CD4-positive, alpha-beta memory T cell (primary cell): ENCODE measurements at regions of chr1 and their contacts with region 1.

Region 1: DNA sequence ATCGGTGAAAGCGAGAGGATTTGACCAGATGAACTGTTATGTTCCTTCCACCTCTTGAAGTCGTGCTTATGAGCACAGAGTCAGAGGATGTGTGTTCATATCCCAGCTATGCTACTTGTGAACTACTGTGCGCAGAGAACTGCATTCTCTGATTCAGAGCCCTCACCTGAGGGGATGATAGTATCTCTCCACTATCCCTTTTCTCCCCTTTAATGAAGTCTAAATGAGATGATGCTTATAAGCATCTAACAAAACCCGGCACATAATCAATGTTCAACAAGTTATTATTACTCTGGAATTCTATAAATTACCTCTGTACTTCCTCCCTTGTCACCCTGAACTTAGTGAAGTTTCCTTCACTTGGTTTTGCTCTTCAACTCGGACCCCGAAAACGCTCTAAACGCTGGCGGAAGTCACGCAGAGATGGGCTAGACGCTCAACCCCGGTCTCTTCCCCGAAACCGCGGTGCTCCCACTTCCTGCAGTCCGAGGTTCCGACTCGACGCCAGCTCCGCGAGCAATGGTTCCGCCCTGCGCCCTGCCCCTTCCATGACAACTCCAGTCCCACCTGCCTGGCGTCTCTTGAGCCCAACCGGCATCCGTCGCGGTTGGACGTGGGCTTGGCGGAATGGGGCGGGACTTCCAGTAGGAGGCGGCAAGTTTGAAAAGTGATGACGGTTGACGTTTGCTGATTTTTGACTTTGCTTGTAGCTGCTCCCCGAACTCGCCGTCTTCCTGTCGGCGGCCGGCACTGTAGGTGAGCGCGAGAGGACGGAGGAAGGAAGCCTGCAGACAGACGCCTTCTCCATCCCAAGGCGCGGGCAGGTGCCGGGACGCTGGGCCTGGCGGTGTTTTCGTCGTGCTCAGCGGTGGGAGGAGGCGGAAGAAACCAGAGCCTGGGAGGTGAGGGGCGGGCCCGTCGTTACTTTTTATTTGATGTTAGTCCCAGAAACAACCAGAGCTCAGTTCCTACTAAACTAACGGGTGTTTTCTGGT is at the start of gene NUF2:
- DNase-seq: peak; percentile 96 to 97 (median 96)
- H3K4me3 ChIP-seq: peak within 1 kb of the TSS; percentile 75 to 78
- H3K4me3 Mint-ChIP-seq: peak within 1 kb of the TSS; percentile 94 to 99 (median 96)
- H3K27ac ChIP-seq: peak within 1 kb of the TSS; percentile 70
- H3K27ac Mint-ChIP-seq: peak within 1 kb of the TSS; percentile 94 to 99 (median 97)
- H3K4me1 ChIP-seq: peaks cover 24% of the 10 kb centered on the region
- H3K4me1 Mint-ChIP-seq: peaks cover 13 to 24% (median 21%) of the 10 kb centered on the region in 4 donors
- H3K27me3 ChIP-seq: no peaks in the 10 kb centered on the region
- H3K27me3 Mint-ChIP-seq: no peaks in the 10 kb centered on the region
- total RNA-seq, gene NUF2: 1.7 to 1.8 TPM

Region 2: DNA sequence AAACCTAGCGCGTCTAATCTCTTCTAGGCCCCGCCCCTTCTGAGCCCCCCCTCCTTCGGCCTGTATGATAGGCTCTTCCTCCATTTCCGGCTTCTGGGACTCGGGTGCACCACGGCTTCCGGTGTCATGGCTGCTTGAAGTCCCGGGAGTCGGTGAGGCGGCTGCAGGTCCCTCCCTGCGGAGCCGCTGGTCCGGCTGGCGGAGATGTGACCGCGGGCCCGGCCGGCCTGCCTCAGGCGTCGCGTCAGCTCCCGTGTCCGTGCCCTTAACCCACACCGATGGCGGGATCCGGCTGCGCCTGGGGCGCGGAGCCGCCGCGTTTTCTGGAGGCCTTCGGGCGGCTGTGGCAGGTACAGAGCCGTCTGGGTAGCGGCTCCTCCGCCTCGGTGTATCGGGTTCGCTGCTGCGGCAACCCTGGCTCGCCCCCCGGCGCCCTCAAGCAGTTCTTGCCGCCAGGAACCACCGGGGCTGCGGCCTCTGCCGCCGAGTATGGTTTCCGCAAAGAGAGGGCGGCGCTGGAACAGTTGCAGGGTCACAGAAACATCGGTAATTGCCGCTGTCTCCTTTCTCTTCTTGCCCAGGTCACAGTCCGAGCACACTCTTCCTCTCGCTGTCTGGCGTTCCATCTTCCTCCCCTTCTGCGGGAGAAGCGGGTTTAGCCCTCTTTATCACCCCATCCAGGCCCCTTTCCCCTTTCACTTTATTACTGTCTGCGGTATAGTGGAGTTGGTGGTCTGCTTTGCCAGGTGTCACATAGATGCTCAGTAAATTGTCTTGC is 823.7 kb before region 1 on chr1 and contains the start of gene UHMK1:
- CTCF ChIA-PET with region 1: no interaction called
- POLR2A ChIA-PET with region 1: no interaction called
- intact Hi-C with region 1: loop called (anchors 2 kb)
- DNase-seq: peak; percentile 87 to 96 (median 90)
- H3K4me3 ChIP-seq: peak within 1 kb of the TSS; percentile 18 to 67
- H3K4me3 Mint-ChIP-seq: peak within 1 kb of the TSS; percentile 89 to 98 (median 94)
- H3K27ac ChIP-seq: peak within 1 kb of the TSS; percentile 82
- H3K27ac Mint-ChIP-seq: peak within 1 kb of the TSS; percentile 91 to 98 (median 97)
- H3K4me1 ChIP-seq: peaks cover 35% of the 10 kb centered on the region
- H3K4me1 Mint-ChIP-seq: peaks cover 24 to 42% (median 33%) of the 10 kb centered on the region in 4 donors
- H3K27me3 ChIP-seq: no peaks in the 10 kb centered on the region
- H3K27me3 Mint-ChIP-seq: peaks cover 0 to under 1% of the 10 kb centered on the region in 2 donors
- total RNA-seq, gene UHMK1: 70.2 to 72.5 TPM

Region 3: DNA sequence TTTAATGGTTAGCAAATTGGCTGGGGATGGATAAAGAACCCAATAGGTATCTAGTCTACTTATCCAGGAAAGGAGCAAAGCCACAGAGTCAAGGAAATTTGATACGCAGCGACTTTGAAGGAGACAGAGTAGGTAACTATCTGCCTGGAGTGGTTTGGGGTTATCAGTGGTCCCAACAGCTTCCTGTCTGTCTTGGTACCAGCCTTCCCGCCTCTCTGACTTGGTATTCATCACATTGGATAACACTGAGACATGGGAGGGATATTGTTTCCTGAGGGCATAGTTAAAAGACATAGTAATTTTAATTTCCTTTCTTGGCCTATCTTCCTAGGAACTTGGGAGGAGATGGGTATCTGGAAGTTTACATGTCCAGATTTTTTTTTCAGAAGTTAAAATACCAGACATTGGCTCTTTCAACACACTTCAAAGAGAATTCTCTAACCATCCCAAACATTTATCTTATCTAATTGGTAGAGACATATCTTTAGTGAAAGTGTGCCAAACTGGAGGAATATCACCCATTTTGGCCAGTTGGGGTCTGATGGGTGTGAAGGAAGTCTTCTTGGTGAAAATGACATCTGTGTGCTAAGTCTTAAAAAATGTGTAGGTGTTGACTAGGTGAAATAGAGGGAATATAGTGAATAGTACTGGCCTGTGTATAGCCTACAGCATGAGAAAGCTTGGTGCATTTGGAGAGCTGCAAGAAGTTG is 183.9 kb before region 1 on chr1:
- CTCF ChIA-PET with region 1: no interaction called
- POLR2A ChIA-PET with region 1: no interaction called
- intact Hi-C with region 1: no loop called
- DNase-seq: no peak
- H3K4me3 ChIP-seq: no peak overlapping the region
- H3K4me3 Mint-ChIP-seq: no peak overlapping the region
- H3K27ac ChIP-seq: no peak overlapping the region
- H3K27ac Mint-ChIP-seq: no peak overlapping the region
- H3K4me1 ChIP-seq: no peaks in the 10 kb centered on the region
- H3K4me1 Mint-ChIP-seq: no peaks in the 10 kb centered on the region
- H3K27me3 ChIP-seq: no peaks in the 10 kb centered on the region
- H3K27me3 Mint-ChIP-seq: peaks cover 0 to 2% of the 10 kb centered on the region in 2 donors